Prostate gland (tissue), 2 donors: ENCODE measurements at regions of chr12 and their contacts with region 1.

Region 1: DNA sequence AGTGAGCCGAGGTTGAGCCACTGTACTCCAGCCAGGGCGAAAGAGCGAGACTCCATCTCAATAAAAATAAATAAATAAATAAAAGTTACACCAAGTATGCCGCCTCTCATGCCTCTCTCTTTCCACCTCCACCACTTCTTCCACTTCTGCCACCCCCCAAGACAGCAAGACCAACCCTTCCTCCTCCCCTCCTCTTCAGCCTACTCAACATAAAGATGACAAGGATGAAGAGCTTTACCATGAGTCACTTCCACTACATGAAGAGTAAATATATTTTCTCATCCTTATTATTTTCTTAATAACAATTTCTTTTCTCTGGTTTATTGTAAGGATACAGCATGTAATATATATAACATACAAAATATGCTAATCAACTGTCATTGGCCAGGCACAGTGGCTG is 3.6 kb upstream of the TMED2 start:
- DNase-seq: no peak
- H3K4me3 ChIP-seq: no peak overlapping the region
- H3K27ac ChIP-seq: no peak overlapping the region
- H3K4me1 ChIP-seq: peaks cover 2% of the 10 kb centered on the region
- H3K27me3 ChIP-seq: no peaks in the 10 kb centered on the region
- CTCF ChIP-seq: no peak
- POLR2A ChIP-seq: no peak

Region 2: DNA sequence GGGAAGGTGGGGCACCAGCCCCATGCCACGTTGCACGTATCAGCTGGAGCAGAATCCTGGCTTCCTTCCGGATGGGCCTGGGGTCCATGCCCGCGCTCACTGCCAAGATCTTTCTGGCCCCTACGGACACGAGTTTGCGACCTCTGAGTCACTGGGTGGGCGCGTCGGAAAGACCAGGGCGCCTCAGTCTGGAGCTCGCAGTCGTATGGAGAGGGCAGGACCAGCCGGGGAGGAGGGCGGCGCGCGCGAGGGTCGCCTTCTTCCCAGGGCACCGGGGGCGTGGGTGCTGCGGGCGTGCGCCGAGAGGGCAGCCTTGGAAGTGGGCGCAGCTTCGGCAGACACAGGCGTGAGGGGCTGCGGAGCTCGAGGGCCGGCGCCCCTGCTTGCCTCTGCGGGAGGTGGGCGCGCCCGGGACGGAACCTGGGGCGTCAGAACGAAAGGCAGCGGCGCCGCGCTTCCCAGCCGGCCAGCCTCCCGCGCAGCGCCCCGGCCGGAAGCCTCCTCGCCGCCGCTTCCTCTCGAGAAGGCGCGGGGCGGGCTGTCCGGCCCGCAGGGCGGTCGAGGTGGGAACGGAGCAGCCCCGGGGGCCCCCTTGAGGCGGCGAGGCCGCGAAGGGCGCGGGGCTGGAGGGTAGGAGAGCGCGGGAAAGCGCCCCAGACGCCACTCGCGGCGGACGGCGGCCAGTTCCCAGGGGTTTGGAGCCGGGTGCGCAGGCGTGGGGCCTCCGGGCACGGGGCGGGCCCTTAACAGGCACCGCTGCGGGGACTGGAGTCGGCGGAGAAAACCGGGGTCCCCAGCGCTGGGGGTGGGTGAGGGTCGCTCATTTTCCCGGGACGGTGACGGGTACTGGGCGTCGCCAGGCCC is 600.4 kb before region 1 on chr12 and contains the start of gene ARL6IP4:
- intact Hi-C with region 1: loop called (anchors 5 kb)
- DNase-seq: peak; percentile 48
- H3K4me3 ChIP-seq: peak within 1 kb of the TSS; percentile 95 to 97
- H3K27ac ChIP-seq: peak within 1 kb of the TSS; percentile 84 to 85
- H3K4me1 ChIP-seq: peaks cover 48% of the 10 kb centered on the region
- H3K27me3 ChIP-seq: no peaks in the 10 kb centered on the region
- CTCF ChIP-seq: peak in 2 of 4 experiments; percentile 14 to 17
- POLR2A ChIP-seq: peak; percentile 66
- total RNA-seq, gene ARL6IP4: 232 to 257 TPM

Region 3: GRCh38 chr12:123398550-123399254 is 182.1 kb before region 1 on chr12:
- intact Hi-C with region 1: loop called (anchors 5 kb)
- DNase-seq: peak; percentile 76
- H3K4me3 ChIP-seq: no peak overlapping the region
- H3K27ac ChIP-seq: peak overlapping the region; percentile 87 to 94
- H3K4me1 ChIP-seq: peaks cover 13% of the 10 kb centered on the region
- H3K27me3 ChIP-seq: no peaks in the 10 kb centered on the region
- CTCF ChIP-seq: no peak
- POLR2A ChIP-seq: no peak

Region 4: GRCh38 chr12:123519141-123520001 is 61.4 kb before region 1 on chr12:
- intact Hi-C with region 1: loop called (anchors 5 kb)
- DNase-seq: peak; percentile 83
- H3K4me3 ChIP-seq: no peak overlapping the region
- H3K27ac ChIP-seq: peak overlapping the region; percentile 35 to 57
- H3K4me1 ChIP-seq: no peaks in the 10 kb centered on the region
- H3K27me3 ChIP-seq: no peaks in the 10 kb centered on the region
- CTCF ChIP-seq: no peak
- POLR2A ChIP-seq: no peak

Region 5: DNA sequence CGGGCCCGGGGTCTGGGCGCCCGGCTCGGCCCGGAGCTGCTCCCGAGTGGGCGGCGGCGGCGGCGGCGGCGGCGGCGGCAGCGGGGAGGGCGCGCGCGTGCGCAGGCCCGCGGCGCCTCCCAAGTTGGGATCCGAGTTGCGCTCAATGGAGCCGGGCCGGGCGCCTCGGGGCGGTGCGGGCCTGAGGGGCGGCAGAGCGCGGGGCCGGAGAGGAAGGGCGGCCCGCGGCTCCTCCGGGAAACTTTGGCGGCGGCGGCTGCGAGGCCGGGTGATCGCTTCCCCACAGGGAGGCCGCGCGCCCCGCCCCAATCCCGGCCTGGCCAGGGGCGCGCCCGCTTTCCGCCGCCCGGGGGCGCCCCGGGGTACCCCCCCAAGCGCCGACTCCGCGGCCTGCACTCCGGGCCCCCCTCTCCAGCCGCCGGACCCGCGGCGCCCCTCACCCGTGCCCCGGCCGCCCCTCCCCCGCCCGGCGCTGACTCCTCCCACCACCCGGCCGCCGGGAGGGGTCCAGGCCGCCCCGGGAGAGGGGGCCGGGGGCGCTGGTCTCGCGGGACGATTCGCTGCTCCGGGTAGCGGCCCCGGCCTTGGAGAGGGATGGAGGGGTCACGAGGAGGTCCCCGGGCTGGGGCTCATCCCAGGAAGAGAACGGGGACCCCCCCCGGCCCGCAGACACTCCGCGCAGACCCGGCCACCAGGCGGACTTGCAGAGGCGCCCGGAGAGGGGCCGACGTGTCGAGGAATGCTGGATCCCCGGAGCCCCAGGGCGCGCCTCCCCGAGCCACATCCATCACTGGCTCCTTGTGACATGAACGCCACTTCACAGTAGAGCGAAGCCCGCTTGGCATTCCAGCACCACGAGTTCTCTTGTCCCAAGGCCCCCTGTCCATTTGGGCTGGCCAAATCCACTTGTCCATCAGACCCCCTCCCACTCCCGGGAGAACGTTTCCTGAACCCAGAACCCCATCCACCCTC is 46.8 kb before region 1 on chr12 and contains the start of gene RILPL1:
- intact Hi-C with region 1: loop called (anchors 5 kb)
- DNase-seq: peak; percentile 20
- H3K4me3 ChIP-seq: peak within 1 kb of the TSS; percentile 76 to 80
- H3K27ac ChIP-seq: peak within 1 kb of the TSS; percentile 81 to 90
- H3K4me1 ChIP-seq: peaks cover 8% of the 10 kb centered on the region
- H3K27me3 ChIP-seq: no peaks in the 10 kb centered on the region
- CTCF ChIP-seq: peak in 3 of 4 experiments; percentile 33 to 38 (median 34)
- POLR2A ChIP-seq: no peak
- total RNA-seq, gene RILPL1: 8.6 to 25.7 TPM